Activated CD4-positive, alpha-beta memory T cell treated with anti-CD3 and anti-CD28 coated beads for 36 hours (primary cell): ENCODE measurements at regions of chr9 and their contacts with region 1.

Region 1: GRCh38 chr9:122125158-122125508 is 32.0 kb upstream of the TTLL11 start:
- DNase-seq: peak; percentile 85
- H3K4me3 Mint-ChIP-seq: no peak overlapping the region
- H3K27ac Mint-ChIP-seq: no peak overlapping the region
- H3K4me1 Mint-ChIP-seq: peaks cover 18% of the 10 kb centered on the region
- H3K27me3 Mint-ChIP-seq: peaks cover 35% of the 10 kb centered on the region

Region 2: GRCh38 chr9:122092611-122093506 is 32.3 kb before region 1 on chr9 and contains the start of gene TTLL11:
- CTCF ChIA-PET with region 1: interaction called, 365 read pairs
- POLR2A ChIA-PET with region 1: no interaction called
- intact Hi-C with region 1: no loop called
- DNase-seq: peak; percentile 97
- H3K4me3 Mint-ChIP-seq: peak within 1 kb of the TSS; percentile 79
- H3K27ac Mint-ChIP-seq: no peak within 1 kb of the TSS
- H3K4me1 Mint-ChIP-seq: peaks cover 33% of the 10 kb centered on the region
- H3K27me3 Mint-ChIP-seq: peaks cover 5% of the 10 kb centered on the region
- total RNA-seq, gene TTLL11: 0.97 TPM

Region 3: DNA sequence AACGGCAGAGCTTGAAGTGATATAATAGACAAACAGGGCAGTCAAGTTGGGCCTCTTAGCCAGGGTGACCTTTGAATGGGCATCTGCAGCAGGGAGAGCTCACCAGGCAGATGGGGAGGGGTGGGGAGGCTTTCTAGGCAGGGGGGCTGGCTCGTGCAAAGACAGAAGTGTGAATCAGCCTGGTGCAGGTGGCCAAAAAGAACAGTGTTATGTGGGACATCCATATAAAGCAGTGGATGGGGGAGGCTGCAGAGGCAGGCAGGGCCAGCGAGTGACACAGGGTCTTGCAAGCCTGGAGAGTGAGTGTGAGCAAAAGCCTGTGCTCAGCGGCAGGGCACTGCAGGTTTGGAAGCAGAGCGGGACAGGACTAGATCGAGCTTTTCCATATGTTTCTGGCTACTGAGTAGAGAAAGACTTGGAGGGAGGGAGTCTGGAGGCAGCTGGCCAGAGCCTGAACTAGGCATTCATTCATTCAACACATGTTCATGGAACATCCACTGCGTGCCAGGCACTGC is 17.8 kb before region 1 on chr9:
- CTCF ChIA-PET with region 1: interaction called, 36 read pairs
- POLR2A ChIA-PET with region 1: no interaction called
- intact Hi-C with region 1: no loop called
- DNase-seq: no peak
- H3K4me3 Mint-ChIP-seq: no peak overlapping the region
- H3K27ac Mint-ChIP-seq: no peak overlapping the region
- H3K4me1 Mint-ChIP-seq: no peaks in the 10 kb centered on the region
- H3K27me3 Mint-ChIP-seq: no peaks in the 10 kb centered on the region

Region 4: DNA sequence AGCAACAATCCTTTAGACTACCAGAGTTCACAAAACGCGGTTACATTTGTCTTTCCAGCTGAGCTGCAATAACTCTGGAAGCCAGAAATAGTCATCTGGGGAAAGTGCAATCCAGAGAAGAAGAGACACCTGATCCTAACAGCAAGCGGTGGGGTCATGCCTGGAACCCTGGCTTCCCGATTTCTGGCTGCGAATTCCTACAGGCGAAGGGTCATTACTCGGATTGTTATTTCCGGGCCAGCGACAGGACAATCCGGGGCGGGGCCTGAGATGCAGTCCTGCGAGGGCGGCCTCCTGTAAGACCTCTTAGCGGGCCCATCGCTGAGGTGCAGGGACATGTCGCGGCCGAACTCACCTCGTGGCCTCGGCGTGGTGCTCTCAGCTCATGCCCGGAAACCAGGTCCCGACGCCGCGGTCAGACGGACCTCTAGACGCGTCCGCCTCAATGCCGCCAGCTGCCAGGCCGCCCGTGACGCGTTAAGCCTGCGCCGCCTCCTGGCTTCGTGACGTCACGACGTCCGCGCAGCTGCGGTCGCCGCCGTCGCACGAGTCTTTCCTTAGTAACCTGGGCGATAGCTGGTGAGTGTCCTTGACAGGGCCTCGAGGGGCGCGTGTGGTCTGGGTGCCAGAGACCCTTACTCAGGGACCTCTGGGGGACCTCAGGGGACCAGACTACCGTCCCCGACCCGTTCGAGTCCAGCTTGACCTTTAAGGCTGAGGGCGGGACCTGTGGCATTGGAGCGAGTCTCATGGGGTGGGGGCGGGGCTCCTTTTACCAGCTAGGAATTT is 139.4 kb after region 1 on chr9 and contains the starts of genes MRRF and RBM18:
- CTCF ChIA-PET with region 1: interaction called, 40 read pairs
- POLR2A ChIA-PET with region 1: interaction called, 3 read pairs
- intact Hi-C with region 1: loop called (anchors 1 kb)
- DNase-seq: peak; percentile 94
- H3K4me3 Mint-ChIP-seq: peak within 1 kb of the TSS; percentile 99
- H3K27ac Mint-ChIP-seq: peak within 1 kb of the TSS; percentile 98
- H3K4me1 Mint-ChIP-seq: peaks cover 46% of the 10 kb centered on the region
- H3K27me3 Mint-ChIP-seq: no peaks in the 10 kb centered on the region
- total RNA-seq, gene MRRF: 47.2 to 52.5 TPM
- total RNA-seq, gene RBM18: 25.1 to 25.9 TPM

Region 5: GRCh38 chr9:122453677-122454135 is 328.6 kb after region 1 on chr9:
- CTCF ChIA-PET with region 1: no interaction called
- POLR2A ChIA-PET with region 1: no interaction called
- intact Hi-C with region 1: loop called (anchors 1 kb)
- DNase-seq: no peak
- H3K4me3 Mint-ChIP-seq: no peak overlapping the region
- H3K27ac Mint-ChIP-seq: no peak overlapping the region
- H3K4me1 Mint-ChIP-seq: no peaks in the 10 kb centered on the region
- H3K27me3 Mint-ChIP-seq: peaks cover 8% of the 10 kb centered on the region